Psoas muscle (tissue), 8 donors: ENCODE measurements at regions of chr18 and their contacts with region 1.

Region 1: GRCh38 chr18:49500201-49500921 is 13.3 kb upstream of the C18orf32 start:
- DNase-seq: no peak
- ATAC-seq: no peak
- H3K4me3 ChIP-seq: no peak overlapping the region
- H3K27ac ChIP-seq: no peak overlapping the region
- H3K4me1 ChIP-seq: no peaks in the 10 kb centered on the region
- H3K27me3 ChIP-seq: peaks cover 0 to 19% (median 0%) of the 10 kb centered on the region in 3 donors
- CTCF ChIP-seq: no peak

Region 2: GRCh38 chr18:49464718-49465598 is 35.4 kb before region 1 on chr18:
- intact Hi-C with region 1: no loop called
- DNase-seq: no peak
- ATAC-seq: no peak
- H3K4me3 ChIP-seq: no peak overlapping the region
- H3K27ac ChIP-seq: no peak overlapping the region
- H3K4me1 ChIP-seq: peaks cover 3% of the 10 kb centered on the region
- H3K27me3 ChIP-seq: no peaks in the 10 kb centered on the region
- CTCF ChIP-seq: no peak

Region 3: GRCh38 chr18:49768051-49768391 is 267.7 kb after region 1 on chr18:
- intact Hi-C with region 1: loop called in 1 of 2 experiments (anchors 10 kb)
- DNase-seq: peak; percentile 30 to 61
- ATAC-seq: peak in 2 of 4 donors; percentile 38 to 59
- H3K4me3 ChIP-seq: no peak overlapping the region
- H3K27ac ChIP-seq: no peak overlapping the region
- H3K4me1 ChIP-seq: no peaks in the 10 kb centered on the region
- H3K27me3 ChIP-seq: no peaks in the 10 kb centered on the region
- CTCF ChIP-seq: peak; percentile 48